ENCODE measurements at regions of chr2 and their contacts with region 1.

Region 1: GRCh38 chr2:4930704-4931103 is 761.5 kb upstream of the SOX11 start:
- DNase-seq: no peak
- ATAC-seq: no peak
- H3K4me3 ChIP-seq: no peak overlapping the region
- H3K27ac ChIP-seq: no peak overlapping the region
- H3K4me1 ChIP-seq: no peaks in the 10 kb centered on the region
- H3K27me3 ChIP-seq: no peaks in the 10 kb centered on the region
- CTCF ChIP-seq: no peak
- EP300 ChIP-seq: no peak
- POLR2A ChIP-seq: no peak
- RAD21 ChIP-seq: no peak

Region 2: DNA sequence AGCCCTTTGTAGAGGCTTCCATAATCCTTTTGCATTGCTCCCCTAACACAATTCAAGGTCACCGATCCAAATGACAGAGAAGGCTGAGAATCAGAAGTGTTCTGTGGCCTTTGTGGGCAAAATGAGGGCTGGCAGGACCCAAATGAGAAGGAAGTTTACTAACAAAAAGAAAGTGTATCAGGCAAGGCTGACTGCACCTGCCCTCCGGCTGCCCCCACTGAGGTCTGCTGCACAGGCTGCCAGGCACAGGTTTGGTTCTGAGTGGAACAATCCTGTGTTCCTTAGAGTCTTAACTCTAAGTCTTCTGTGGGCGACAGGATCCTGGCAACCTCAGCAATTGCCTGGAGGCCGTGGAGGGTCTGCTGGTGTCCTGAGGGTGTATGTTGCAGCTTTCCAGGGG is 1366.5 kb after region 1 on chr2:
- CTCF ChIA-PET with region 1: no interaction called
- POLR2A ChIA-PET with region 1: no interaction called
- in situ Hi-C with region 1: no loop called
- intact Hi-C with region 1: loop called (anchors 5 kb)
- DNase-seq: no peak
- ATAC-seq: no peak
- H3K4me3 ChIP-seq: no peak overlapping the region
- H3K27ac ChIP-seq: no peak overlapping the region
- H3K4me1 ChIP-seq: no peaks in the 10 kb centered on the region
- H3K27me3 ChIP-seq: no peaks in the 10 kb centered on the region
- CTCF ChIP-seq: no peak
- EP300 ChIP-seq: no peak
- POLR2A ChIP-seq: no peak
- RAD21 ChIP-seq: no peak

Measured in HepG2 (cell line).